OCI-LY7 (cell line): ENCODE measurements at regions of chr3 and their contacts with region 1.

Region 1: DNA sequence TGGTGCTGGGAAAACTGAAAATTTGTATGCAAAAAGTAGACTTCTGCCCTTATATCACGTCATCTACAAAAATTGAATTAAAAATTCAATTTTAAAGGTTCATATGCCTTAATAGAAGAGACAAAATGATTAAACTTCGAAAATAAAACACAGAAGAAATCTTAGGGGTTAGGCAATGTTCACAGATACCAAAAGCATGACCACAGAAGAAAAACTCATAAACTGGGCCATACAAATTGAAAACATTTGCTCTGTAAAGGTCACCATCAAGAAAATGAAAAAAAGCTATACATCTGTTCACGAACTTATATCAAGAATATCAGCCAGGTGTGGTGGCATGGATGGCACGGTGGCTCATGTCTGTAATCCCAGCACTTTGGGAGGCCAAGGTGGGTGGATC is 245.1 kb downstream of the PCCB start:
- DNase-seq: no peak
- H3K4me3 ChIP-seq: no peak overlapping the region
- H3K27ac ChIP-seq: no peak overlapping the region
- H3K4me1 ChIP-seq: no peaks in the 10 kb centered on the region
- CTCF ChIP-seq: no peak

Region 2: GRCh38 chr3:136532766-136533165 is 37.6 kb after region 1 on chr3:
- CTCF ChIA-PET with region 1: no interaction called
- POLR2A ChIA-PET with region 1: no interaction called
- intact Hi-C with region 1: loop called (anchors 1 kb)
- DNase-seq: no peak
- H3K4me3 ChIP-seq: no peak overlapping the region
- H3K27ac ChIP-seq: no peak overlapping the region
- H3K4me1 ChIP-seq: no peaks in the 10 kb centered on the region
- CTCF ChIP-seq: no peak